ENCODE measurements at regions of chr1 and their contacts with region 1.

Region 1: DNA sequence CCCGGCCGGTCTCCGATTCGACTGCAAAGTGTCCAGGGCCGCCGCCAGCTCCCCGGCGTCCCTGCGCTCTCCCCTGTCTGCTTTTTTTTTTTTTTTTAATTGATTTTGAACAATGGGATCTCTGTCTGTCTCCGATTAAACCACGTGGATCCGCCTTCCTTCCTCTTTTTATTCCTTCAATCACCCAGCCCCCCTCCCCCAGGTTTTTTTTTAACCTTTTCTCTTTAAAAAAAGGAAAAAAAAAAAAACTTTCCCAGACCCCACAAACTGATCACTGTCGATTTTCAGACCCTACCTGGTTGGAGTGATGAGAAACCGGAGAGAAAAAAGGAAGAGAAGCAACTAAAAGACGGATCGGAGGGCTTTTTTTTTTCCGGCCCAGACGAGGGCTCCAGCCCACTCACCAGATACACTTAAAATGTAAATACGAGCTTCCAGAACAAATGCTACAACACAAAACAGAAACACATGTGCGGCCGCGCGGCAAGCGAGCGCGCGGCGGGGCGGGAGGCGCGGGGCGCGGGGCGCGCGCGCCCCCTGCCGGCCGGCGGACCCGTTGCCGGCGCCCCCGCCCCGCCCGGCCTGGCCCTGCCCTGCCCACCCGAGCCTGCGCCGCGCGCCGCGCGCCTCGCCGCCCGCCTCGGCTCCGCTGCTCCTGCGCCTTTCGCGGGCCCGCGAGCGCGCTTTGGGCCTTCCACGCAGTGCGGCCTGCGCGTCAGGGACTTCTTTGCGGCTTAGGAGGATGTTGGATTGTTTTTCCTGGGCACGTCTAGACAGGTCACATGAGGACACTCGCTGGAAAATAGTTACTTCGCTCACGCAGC is at the start of gene RCC2:
- DNase-seq: peak; percentile 69
- H3K4me3 Mint-ChIP-seq: peak within 1 kb of the TSS; percentile 97
- H3K27ac Mint-ChIP-seq: peak within 1 kb of the TSS; percentile 98
- H3K4me1 Mint-ChIP-seq: peaks cover 37% of the 10 kb centered on the region
- H3K27me3 Mint-ChIP-seq: no peaks in the 10 kb centered on the region
- total RNA-seq, gene RCC2: 202 and 203 TPM in 2 replicates

Region 2: GRCh38 chr1:17043656-17044055 is 395.8 kb before region 1 on chr1:
- intact Hi-C with region 1: no loop called
- DNase-seq: no peak
- H3K4me3 Mint-ChIP-seq: no peak overlapping the region
- H3K27ac Mint-ChIP-seq: no peak overlapping the region
- H3K4me1 Mint-ChIP-seq: peaks cover 8% of the 10 kb centered on the region
- H3K27me3 Mint-ChIP-seq: no peaks in the 10 kb centered on the region

Region 3: DNA sequence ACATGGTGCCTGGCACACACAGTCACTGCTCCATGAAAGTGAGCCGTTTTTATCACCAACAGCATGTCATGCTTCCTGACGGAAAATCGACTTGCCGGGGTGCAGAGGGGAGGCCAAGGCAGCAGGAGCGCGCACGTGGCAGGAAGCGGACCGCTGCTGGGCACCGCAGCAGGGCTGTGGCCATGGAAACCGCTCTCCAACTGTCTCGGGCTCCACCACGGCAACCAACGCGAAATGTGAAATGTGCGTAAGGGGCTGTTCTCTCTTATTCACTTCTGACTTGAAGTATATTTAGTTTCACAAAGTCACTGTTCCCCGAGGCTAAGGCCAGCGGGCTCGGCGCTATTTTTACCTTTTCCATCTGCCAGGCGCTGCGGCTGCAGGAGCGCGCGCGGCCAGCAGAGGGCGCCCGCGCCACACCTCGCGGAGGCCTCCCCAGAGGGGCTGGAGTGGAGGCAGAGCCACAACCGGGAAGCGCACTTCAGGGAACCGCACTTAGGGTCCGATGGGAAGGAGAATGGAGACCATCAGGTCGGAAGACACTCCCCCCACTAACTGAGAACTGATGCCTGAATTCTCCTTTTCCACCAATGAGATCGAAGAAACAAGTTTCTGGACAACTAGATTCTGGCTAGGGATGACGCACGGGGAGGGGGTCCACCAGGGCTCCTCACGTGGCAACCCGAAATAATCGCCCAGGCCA is 19.7 kb before region 1 on chr1:
- intact Hi-C with region 1: loop called (anchors 2 kb)
- DNase-seq: peak; percentile 30
- H3K4me3 Mint-ChIP-seq: no peak overlapping the region
- H3K27ac Mint-ChIP-seq: no peak overlapping the region
- H3K4me1 Mint-ChIP-seq: peaks cover 5% of the 10 kb centered on the region
- H3K27me3 Mint-ChIP-seq: no peaks in the 10 kb centered on the region